Tibial artery (tissue), 4 donors: ENCODE measurements at regions of chr10 and their contacts with region 1.

Region 1: GRCh38 chr10:78696791-78697395 is 371.9 kb upstream of the ZMIZ1 start:
- DNase-seq: no peak
- H3K4me3 ChIP-seq: no peak overlapping the region
- H3K27ac ChIP-seq: peak overlapping the region in 1 of 2 donors; percentile 49
- H3K4me1 ChIP-seq: peaks cover 0 to 12% (median 8%) of the 10 kb centered on the region in 4 donors
- H3K27me3 ChIP-seq: no peaks in the 10 kb centered on the region
- CTCF ChIP-seq: no peak

Region 2: GRCh38 chr10:78605800-78606350 is 91.0 kb before region 1 on chr10:
- intact Hi-C with region 1: no loop called
- DNase-seq: no peak
- H3K4me3 ChIP-seq: no peak overlapping the region
- H3K27ac ChIP-seq: no peak overlapping the region
- H3K4me1 ChIP-seq: no peaks in the 10 kb centered on the region
- H3K27me3 ChIP-seq: no peaks in the 10 kb centered on the region
- CTCF ChIP-seq: no peak

Region 3: GRCh38 chr10:78805176-78805575 is 108.3 kb after region 1 on chr10:
- intact Hi-C with region 1: loop called (anchors 10 kb)
- DNase-seq: peak; percentile 74 to 84
- H3K4me3 ChIP-seq: no peak overlapping the region
- H3K27ac ChIP-seq: peak overlapping the region; percentile 74 to 87
- H3K4me1 ChIP-seq: peaks cover 0 to 52% (median 30%) of the 10 kb centered on the region in 4 donors
- H3K27me3 ChIP-seq: no peaks in the 10 kb centered on the region
- CTCF ChIP-seq: no peak

Region 4: DNA sequence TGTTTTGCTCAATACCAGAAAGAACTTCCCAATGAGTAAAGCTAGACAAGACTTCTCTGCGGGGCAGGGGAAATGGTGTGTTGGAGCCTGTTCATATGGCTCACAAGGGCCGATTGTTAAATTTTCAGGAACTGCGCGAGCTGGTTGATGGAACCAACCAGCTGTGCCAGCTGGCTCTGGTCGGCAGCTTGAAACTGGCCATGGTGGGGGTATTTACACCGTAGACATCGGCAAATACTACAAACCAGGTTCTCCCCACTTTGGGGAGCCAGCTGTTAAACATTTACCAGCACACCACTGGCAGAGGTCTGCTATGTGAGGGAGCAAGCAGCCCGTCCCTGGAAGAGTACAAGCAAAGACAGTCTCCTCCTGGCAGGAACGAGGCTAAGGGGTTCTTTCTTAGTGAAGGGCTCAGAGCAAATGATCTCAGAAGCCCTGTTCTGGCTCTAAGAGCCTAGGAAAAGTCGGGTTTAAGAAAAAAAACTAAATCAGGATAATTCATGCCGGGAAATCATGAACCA is 363.0 kb after region 1 on chr10:
- intact Hi-C with region 1: no loop called
- DNase-seq: peak; percentile 37 to 51
- H3K4me3 ChIP-seq: no peak overlapping the region
- H3K27ac ChIP-seq: no peak overlapping the region
- H3K4me1 ChIP-seq: no peaks in the 10 kb centered on the region
- H3K27me3 ChIP-seq: no peaks in the 10 kb centered on the region
- CTCF ChIP-seq: no peak